Activated T-helper 1 cell treated with anti-CD3 and anti-CD28 coated beads, Interleukin-12 subunit alpha, Interleukin-12 subunit beta, Interleukin-2, Interleukin-4 antibody, amounts not matched to agents 30 ng/mL and 10 ng/mL and 1 ng/mL, durations not matched to agents 14 hours and 24 hours and 36 hours (primary cell): ENCODE measurements at regions of chr12 and their contacts with region 1.

Region 1: DNA sequence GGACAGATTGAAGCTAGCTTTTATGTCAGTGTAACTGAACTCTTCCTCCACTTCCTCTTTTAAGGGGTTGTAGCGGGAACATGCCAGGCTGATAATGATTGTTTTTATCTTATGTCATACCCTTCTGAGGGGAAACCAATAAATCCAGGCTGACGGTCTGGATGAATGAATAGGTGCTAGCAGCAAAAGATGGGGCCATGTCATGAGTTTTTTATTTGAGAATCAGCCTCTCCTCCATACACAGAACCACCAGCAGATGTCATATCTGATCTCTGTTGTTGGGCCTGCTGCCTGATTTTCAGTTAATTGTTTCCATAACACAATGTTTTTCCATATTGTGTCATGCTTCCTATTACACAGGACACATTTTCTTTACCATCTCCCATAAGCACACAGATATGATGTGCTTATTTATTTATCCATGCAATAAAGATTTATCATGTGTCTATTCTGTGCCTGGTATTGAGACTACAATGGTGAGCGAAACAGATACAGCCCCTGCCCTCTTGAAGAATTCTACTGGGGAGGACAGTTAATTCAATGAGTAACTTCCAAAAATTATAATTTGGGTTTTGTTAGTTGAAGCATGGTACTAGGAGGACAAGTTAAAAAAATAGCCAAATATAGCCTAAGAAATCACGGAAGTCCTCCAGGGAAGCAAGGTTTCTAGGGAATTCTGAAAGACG is 33.6 kb upstream of the CRY1 start:
- DNase-seq: no peak
- H3K4me3 Mint-ChIP-seq: no peak overlapping the region
- H3K27ac Mint-ChIP-seq: no peak overlapping the region
- H3K4me1 Mint-ChIP-seq: no peaks in the 10 kb centered on the region
- H3K27me3 Mint-ChIP-seq: peaks cover 13% of the 10 kb centered on the region

Region 2: GRCh38 chr12:107884769-107885694 is 758.1 kb after region 1 on chr12:
- intact Hi-C with region 1: loop called (anchors 10 kb)
- DNase-seq: peak; percentile 10
- H3K4me3 Mint-ChIP-seq: no peak overlapping the region
- H3K27ac Mint-ChIP-seq: no peak overlapping the region
- H3K4me1 Mint-ChIP-seq: no peaks in the 10 kb centered on the region
- H3K27me3 Mint-ChIP-seq: peaks cover 6% of the 10 kb centered on the region